Psoas muscle (tissue), 8 donors: ENCODE measurements at regions of chr1 and their contacts with region 1.

Region 1: GRCh38 chr1:51519048-51519864 is at the start of gene EPS15:
- DNase-seq: peak; percentile 90 to 94
- ATAC-seq: peak; percentile 77 to 84 (median 80)
- H3K4me3 ChIP-seq: peak within 1 kb of the TSS; percentile 83
- H3K27ac ChIP-seq: peak within 1 kb of the TSS; percentile 96
- H3K4me1 ChIP-seq: peaks cover 36% of the 10 kb centered on the region
- H3K27me3 ChIP-seq: no peaks in the 10 kb centered on the region
- CTCF ChIP-seq: no peak
- total RNA-seq, gene EPS15: 42.6 to 71.9 (median 54.1) TPM

Region 2: DNA sequence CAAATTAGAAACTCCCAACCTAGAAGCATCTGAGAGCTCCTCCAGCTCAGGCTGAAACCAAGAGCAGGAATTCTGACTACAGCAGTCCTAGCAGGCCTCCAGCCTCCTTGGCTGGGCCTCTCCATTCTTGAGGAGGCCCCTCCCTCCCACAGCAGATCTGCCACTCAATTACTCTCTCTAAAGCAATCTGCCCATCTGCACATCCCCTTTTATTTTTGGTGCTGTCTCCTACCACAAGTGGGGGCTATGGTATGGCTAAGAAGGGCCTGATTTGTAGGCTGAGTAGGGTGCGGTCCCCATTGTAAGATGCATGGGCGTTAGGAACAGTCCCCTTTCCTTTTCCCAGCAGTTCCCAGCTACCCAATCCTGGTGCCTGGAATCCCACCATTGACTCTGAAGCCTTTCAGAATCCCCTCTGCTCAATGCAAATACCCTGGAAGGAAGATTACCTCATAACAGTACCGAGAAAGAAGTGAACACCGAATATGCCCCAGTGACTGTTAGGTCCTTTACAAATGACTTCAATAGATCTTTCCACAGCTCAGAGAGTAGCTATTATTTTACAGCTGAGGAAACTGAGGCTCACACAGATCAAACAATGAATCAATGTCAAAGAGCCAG is 177.3 kb before region 1 on chr1:
- intact Hi-C with region 1: no loop called
- DNase-seq: no peak
- ATAC-seq: no peak
- H3K4me3 ChIP-seq: no peak overlapping the region
- H3K27ac ChIP-seq: no peak overlapping the region
- H3K4me1 ChIP-seq: peaks cover 9% of the 10 kb centered on the region
- H3K27me3 ChIP-seq: peaks cover 0 to 17% (median 5%) of the 10 kb centered on the region in 3 donors
- CTCF ChIP-seq: no peak

Region 3: GRCh38 chr1:51558360-51558924 is 39.2 kb after region 1 on chr1:
- intact Hi-C with region 1: loop called in 1 of 2 experiments (anchors 5 kb)
- DNase-seq: no peak
- ATAC-seq: no peak
- H3K4me3 ChIP-seq: no peak overlapping the region
- H3K27ac ChIP-seq: no peak overlapping the region
- H3K4me1 ChIP-seq: peaks cover 41% of the 10 kb centered on the region
- H3K27me3 ChIP-seq: no peaks in the 10 kb centered on the region
- CTCF ChIP-seq: no peak